Caco-2 (cell line): ENCODE measurements at regions of chr16 and their contacts with region 1.

Region 1: DNA sequence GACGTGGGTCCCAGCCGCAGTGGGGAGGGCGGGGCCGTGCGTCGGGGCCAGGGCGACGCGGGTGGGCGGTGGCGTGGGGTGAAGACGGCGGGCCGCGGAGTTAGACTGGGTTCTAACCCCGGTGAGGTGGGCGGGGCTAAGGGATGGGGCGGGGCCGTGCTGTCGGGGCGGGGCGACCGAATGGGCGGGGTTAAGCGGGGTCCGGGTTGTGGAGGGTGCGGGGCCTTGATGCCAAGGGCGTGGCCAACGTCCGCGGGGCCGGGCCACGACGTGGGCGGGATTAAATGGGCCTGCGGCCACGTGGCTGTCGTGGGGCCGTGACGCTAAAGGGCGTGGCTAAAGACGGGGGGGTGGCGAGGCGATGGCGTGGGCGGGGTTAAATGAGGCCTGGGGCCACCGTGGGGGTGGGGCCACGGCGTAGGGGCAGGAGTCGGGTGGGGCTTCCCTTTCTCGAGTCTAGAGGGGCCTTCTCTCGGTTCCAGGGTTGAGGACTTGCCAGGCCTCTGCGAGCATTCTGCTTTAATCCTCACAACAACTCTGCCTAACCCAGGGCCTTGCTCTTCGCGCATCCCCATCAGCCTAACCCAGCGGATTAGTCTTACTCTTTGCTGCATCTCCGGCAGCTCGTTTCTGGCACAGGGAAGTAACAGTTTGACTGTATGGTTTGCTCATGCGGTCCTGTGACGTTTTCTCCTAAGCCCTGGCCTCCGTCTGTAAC is 739 bp downstream of the TCF25 start:
- DNase-seq: peak; percentile 95 to 98
- H3K4me3 ChIP-seq: peak overlapping the region; percentile 100
- H3K4me3 Mint-ChIP-seq: peak overlapping the region; percentile 87
- H3K27ac Mint-ChIP-seq: peak overlapping the region; percentile 94
- H3K4me1 ChIP-seq: peaks cover 11% of the 10 kb centered on the region
- H3K4me1 Mint-ChIP-seq: peaks cover 7% of the 10 kb centered on the region
- H3K27me3 ChIP-seq: no peaks in the 10 kb centered on the region
- H3K27me3 Mint-ChIP-seq: no peaks in the 10 kb centered on the region
- CTCF ChIP-seq: no peak

Region 2: DNA sequence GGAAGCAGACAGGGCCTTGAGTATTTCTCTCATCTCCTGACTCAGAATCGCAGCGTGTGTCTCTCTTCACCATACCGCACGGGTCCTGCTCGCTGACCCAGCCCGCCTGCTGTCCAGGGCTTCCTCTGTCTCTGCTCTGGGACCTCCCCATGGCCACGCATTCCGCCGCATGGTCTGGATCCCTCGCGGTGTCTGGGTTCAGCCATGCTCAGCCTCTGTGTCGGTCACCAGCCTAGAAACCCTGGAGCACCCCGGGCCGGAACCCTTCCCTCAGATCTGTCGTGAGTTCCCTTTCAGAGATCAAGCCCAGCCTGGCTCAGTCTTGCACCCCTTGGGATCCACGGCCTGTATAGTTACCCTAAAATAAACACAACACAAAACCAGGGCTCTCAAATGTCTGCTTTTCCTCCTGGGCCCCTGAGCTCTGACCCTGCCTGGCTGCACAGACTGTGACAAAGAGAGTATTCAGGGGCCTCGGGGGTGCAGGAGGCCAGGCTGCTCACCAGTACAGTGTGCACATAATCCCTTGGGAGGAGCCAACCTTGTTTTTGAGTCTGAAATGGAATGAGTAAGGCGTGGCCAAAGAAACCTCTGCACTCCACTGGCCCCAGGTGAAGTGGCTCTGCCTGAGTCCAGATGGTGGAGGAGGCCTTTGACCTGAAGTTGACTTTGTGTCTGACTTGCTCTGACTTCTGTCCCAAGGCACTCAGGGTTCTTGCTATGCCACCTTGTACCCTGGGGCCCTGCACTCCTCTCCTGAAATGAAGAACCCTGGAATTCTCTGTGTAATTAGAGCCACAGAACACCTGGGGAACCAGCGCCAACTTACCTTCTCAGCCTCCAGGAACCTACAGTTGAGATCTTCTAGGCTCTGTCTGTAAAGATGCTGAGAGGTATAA is 51.7 kb before region 1 on chr16:
- CTCF ChIA-PET with region 1: no interaction called
- POLR2A ChIA-PET with region 1: interaction called, 11 read pairs
- intact Hi-C with region 1: loop called (anchors 2 kb)
- DNase-seq: peak; percentile 92 to 94
- H3K4me3 ChIP-seq: no peak overlapping the region
- H3K4me3 Mint-ChIP-seq: peak overlapping the region; percentile 71
- H3K27ac Mint-ChIP-seq: peak overlapping the region; percentile 97
- H3K4me1 ChIP-seq: peaks cover 52% of the 10 kb centered on the region
- H3K4me1 Mint-ChIP-seq: peaks cover 41% of the 10 kb centered on the region
- H3K27me3 ChIP-seq: no peaks in the 10 kb centered on the region
- H3K27me3 Mint-ChIP-seq: no peaks in the 10 kb centered on the region
- CTCF ChIP-seq: no peak

Region 3: GRCh38 chr16:89828199-89828778 is 45.8 kb before region 1 on chr16 and contains the start of gene SPIRE2:
- CTCF ChIA-PET with region 1: interaction called, 3 read pairs
- POLR2A ChIA-PET with region 1: no interaction called
- intact Hi-C with region 1: loop called (anchors 2 kb)
- DNase-seq: peak; percentile 78 to 91
- H3K4me3 ChIP-seq: peak within 1 kb of the TSS; percentile 89
- H3K4me3 Mint-ChIP-seq: peak within 1 kb of the TSS; percentile 78
- H3K27ac Mint-ChIP-seq: peak within 1 kb of the TSS; percentile 85
- H3K4me1 ChIP-seq: peaks cover 38% of the 10 kb centered on the region
- H3K4me1 Mint-ChIP-seq: peaks cover 10% of the 10 kb centered on the region
- H3K27me3 ChIP-seq: no peaks in the 10 kb centered on the region
- H3K27me3 Mint-ChIP-seq: no peaks in the 10 kb centered on the region
- CTCF ChIP-seq: no peak
- total RNA-seq, gene SPIRE2: 29.6 and 31.3 TPM in 2 replicates

Region 4: DNA sequence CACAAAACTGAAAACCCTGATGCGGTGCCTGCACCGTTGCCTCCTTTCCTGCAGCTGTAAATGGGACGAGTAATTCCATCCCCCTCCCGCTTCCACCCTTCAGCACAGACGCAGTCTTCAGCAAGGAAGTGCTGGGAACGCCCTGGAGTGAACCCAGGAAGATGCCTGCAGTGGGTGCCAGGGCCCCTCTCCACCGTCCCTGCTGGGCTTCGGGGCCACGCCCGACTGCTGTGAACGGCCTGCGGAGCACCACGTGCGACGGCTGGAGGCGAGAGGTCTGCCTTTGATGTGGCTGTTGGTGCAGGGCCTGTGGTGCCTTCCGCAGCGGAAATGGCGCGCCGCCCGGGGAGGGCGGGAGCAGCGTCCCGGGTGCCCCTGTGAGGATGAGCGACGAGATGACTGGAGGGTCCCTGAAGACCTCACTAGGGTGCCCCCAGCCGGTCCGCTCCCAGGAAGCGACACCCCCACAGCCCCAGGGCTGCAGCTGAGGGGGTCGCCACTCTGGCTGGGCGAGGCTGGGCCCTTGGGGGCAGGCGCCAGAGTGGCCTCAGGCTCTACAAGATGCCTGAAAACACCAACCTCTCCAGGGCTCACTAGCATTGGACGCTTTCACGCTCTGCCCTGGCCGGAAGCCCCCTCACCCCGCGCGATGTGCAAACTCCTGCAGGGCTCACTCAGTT is 43.8 kb after region 1 on chr16:
- CTCF ChIA-PET with region 1: interaction called, 3 read pairs
- POLR2A ChIA-PET with region 1: interaction called, 11 read pairs
- intact Hi-C with region 1: no loop called
- DNase-seq: peak; percentile 83 to 87
- H3K4me3 ChIP-seq: peak overlapping the region; percentile 66
- H3K4me3 Mint-ChIP-seq: peak overlapping the region; percentile 92
- H3K27ac Mint-ChIP-seq: peak overlapping the region; percentile 67
- H3K4me1 ChIP-seq: peaks cover 24% of the 10 kb centered on the region
- H3K4me1 Mint-ChIP-seq: peaks cover 6% of the 10 kb centered on the region
- H3K27me3 ChIP-seq: no peaks in the 10 kb centered on the region
- H3K27me3 Mint-ChIP-seq: no peaks in the 10 kb centered on the region
- CTCF ChIP-seq: no peak

Region 5: DNA sequence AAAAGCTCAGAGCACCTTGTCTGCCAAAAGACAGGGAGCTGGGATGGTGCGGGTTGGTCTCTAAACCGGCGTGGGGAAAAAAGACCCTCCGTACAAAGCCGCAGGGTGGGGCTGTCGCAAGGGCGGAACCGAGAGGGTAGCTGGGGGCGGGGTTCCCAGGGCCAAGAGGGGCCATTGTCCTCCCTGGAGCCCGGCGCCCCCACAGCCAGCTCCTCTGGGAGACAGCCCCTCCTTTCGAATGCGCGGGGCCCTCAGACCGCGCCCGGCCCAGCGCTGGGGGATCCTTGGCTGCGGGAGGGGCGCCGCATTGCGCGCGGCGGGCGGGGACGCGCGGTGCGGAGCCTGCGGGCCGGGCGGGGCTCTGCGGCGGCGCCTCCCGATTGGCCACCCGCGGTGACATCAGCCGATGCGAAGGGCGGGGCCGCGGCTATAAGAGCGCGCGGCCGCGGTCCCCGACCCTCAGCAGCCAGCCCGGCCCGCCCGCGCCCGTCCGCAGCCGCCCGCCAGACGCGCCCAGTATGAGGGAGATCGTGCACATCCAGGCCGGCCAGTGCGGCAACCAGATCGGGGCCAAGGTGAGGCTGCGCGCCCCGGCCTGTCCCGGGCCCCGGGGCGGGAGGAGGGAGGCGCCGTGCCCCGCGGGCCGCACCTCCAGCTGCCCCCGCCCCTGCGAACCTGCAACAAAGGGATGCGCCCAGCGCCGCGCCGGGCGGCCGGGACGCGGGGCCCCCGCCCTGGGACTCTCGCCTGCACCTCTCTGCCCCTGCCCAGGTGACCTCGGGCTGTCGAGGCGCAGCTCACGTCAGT is 49.0 kb after region 1 on chr16 and contains the start of gene TUBB3:
- CTCF ChIA-PET with region 1: interaction called, 3 read pairs
- POLR2A ChIA-PET with region 1: interaction called, 11 read pairs
- intact Hi-C with region 1: no loop called
- DNase-seq: peak; percentile 80 to 90
- H3K4me3 ChIP-seq: peak within 1 kb of the TSS; percentile 72
- H3K4me3 Mint-ChIP-seq: peak within 1 kb of the TSS; percentile 85
- H3K27ac Mint-ChIP-seq: peak within 1 kb of the TSS; percentile 73
- H3K4me1 ChIP-seq: peaks cover 35% of the 10 kb centered on the region
- H3K4me1 Mint-ChIP-seq: peaks cover 6% of the 10 kb centered on the region
- H3K27me3 ChIP-seq: 0 out of 2 replicates have a peak, but pooled peaks cover 2% of the 10 kb centered on the region
- H3K27me3 Mint-ChIP-seq: no peaks in the 10 kb centered on the region
- CTCF ChIP-seq: peak in 1 of 2 experiments; percentile 1
- total RNA-seq, gene TUBB3: 31.3 and 37.5 TPM in 2 replicates